ENCODE measurements at regions of chr18 and their contacts with region 1.

Region 1: GRCh38 chr18:35040988-35041814 is at the start of gene MAPRE2:
- DNase-seq: peak; percentile 100
- ATAC-seq: peak; percentile 84
- H3K4me3 Mint-ChIP-seq: peak within 1 kb of the TSS; percentile 98
- H3K27ac Mint-ChIP-seq: peak within 1 kb of the TSS; percentile 98
- H3K4me1 Mint-ChIP-seq: peaks cover 85% of the 10 kb centered on the region
- H3K27me3 Mint-ChIP-seq: no peaks in the 10 kb centered on the region
- CTCF ChIP-seq: no peak
- total RNA-seq, gene MAPRE2: 47.9 and 53.8 TPM in 2 replicates

Region 2: DNA sequence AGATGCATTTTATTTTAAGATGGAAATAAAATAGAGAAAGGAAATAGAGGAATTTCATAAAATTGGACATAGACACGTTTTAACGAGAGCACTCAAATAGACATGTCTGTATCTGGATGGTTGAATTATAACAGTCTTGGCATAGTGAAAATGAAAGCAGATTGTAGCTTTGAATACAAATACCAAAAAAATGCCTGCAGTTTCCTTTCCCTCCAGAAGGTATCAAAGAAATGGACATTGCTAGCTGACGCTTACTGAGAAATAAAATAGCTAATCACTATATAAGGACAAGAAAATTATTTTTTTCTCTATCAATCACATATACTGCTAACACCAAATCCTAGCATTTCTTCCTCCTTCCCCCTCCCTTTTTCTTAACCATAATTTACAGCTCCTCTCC is 11.4 kb before region 1 on chr18:
- CTCF ChIA-PET with region 1: interaction called, 34 read pairs
- POLR2A ChIA-PET with region 1: interaction called, 110 read pairs
- intact Hi-C with region 1: loop called (anchors 1 kb)
- DNase-seq: no peak
- ATAC-seq: peak; percentile 84
- H3K4me3 Mint-ChIP-seq: peak overlapping the region; percentile 84
- H3K27ac Mint-ChIP-seq: peak overlapping the region; percentile 97
- H3K4me1 Mint-ChIP-seq: peaks cover 41% of the 10 kb centered on the region
- H3K27me3 Mint-ChIP-seq: no peaks in the 10 kb centered on the region
- CTCF ChIP-seq: no peak

Region 3: GRCh38 chr18:35143622-35144596 is 102.7 kb after region 1 on chr18:
- CTCF ChIA-PET with region 1: interaction called, 25 read pairs
- POLR2A ChIA-PET with region 1: interaction called, 5 read pairs
- intact Hi-C with region 1: no loop called
- DNase-seq: no peak
- ATAC-seq: peak; percentile 74
- H3K4me3 Mint-ChIP-seq: no peak overlapping the region
- H3K27ac Mint-ChIP-seq: no peak overlapping the region
- H3K4me1 Mint-ChIP-seq: peaks cover 49% of the 10 kb centered on the region
- H3K27me3 Mint-ChIP-seq: no peaks in the 10 kb centered on the region
- CTCF ChIP-seq: no peak

Region 4: GRCh38 chr18:35267161-35267651 is 226.0 kb after region 1 on chr18:
- CTCF ChIA-PET with region 1: interaction called, 3 read pairs
- POLR2A ChIA-PET with region 1: interaction called, 15 read pairs
- intact Hi-C with region 1: no loop called
- DNase-seq: peak; percentile 72
- ATAC-seq: peak; percentile 89
- H3K4me3 Mint-ChIP-seq: peak overlapping the region; percentile 94
- H3K27ac Mint-ChIP-seq: peak overlapping the region; percentile 93
- H3K4me1 Mint-ChIP-seq: peaks cover 26% of the 10 kb centered on the region
- H3K27me3 Mint-ChIP-seq: no peaks in the 10 kb centered on the region
- CTCF ChIP-seq: no peak

Region 5: GRCh38 chr18:35513181-35513936 is 472.2 kb after region 1 on chr18:
- CTCF ChIA-PET with region 1: no interaction called
- POLR2A ChIA-PET with region 1: no interaction called
- intact Hi-C with region 1: loop called (anchors 5 kb)
- DNase-seq: no peak
- ATAC-seq: no peak
- H3K4me3 Mint-ChIP-seq: no peak overlapping the region
- H3K27ac Mint-ChIP-seq: no peak overlapping the region
- H3K4me1 Mint-ChIP-seq: peaks cover 13% of the 10 kb centered on the region
- H3K27me3 Mint-ChIP-seq: no peaks in the 10 kb centered on the region
- CTCF ChIP-seq: no peak

Region 6: DNA sequence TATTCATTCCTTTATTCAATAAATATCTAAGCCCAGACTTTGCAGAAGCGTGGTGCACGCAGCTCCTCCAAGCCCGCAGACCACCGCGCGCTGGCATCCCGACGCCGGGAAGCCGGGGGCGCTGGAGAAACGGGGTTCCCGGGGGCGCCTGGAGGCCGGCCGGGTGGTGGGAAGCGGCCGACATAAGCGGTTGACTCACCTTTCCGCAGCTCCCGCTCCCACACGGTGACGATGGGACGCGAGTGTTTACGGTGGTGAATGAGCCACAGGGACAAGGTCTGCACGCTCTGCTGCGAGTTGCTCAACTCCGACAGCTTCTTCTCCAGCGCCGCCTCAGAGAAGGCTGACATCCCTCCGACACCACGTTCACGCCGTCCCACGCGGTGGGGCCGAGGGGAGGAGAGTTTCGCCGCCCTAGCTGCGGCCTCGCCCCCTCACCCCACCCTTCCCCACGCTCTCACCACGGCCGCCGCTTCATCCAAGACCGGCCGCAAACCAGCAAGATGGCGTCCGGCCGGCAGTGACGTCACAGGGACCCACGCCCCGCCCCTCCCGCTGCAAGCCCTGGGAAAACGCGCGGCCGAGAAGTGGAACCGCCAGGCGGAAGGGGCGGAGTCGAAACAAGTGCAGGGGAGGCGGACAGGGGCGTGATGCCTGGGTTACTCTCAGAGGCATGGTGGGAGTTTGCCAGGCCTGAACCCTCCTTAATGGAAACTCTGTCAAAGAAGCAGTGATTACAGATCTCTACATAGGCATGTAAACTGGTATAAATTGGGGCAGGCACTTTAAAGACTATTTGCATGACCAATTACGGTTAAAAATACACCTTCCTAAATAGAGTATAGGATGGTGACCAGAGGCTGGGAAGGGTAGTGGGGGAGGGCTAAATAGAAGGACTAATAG is 1026.1 kb after region 1 on chr18 and contains the start of gene RPRD1A:
- CTCF ChIA-PET with region 1: no interaction called
- POLR2A ChIA-PET with region 1: no interaction called
- intact Hi-C with region 1: loop called (anchors 5 kb)
- DNase-seq: peak; percentile 99
- ATAC-seq: peak; percentile 91
- H3K4me3 Mint-ChIP-seq: peak within 1 kb of the TSS; percentile 93
- H3K27ac Mint-ChIP-seq: peak within 1 kb of the TSS; percentile 88
- H3K4me1 Mint-ChIP-seq: peaks cover 44% of the 10 kb centered on the region
- H3K27me3 Mint-ChIP-seq: no peaks in the 10 kb centered on the region
- CTCF ChIP-seq: no peak
- total RNA-seq, gene RPRD1A: 40.7 and 47.6 TPM in 2 replicates

Measured in activated B cell treated with CpG ODN at 0.5 μM for 24 hours (primary cell).